Activated T-helper 1 cell treated with anti-CD3 and anti-CD28 coated beads, Interleukin-12 subunit alpha, Interleukin-12 subunit beta, Interleukin-2, Interleukin-4 antibody, amounts not matched to agents 30 ng/mL and 10 ng/mL and 1 ng/mL, durations not matched to agents 14 hours and 24 hours and 36 hours (primary cell): ENCODE measurements at regions of chr3 and their contacts with region 1.

Region 1: DNA sequence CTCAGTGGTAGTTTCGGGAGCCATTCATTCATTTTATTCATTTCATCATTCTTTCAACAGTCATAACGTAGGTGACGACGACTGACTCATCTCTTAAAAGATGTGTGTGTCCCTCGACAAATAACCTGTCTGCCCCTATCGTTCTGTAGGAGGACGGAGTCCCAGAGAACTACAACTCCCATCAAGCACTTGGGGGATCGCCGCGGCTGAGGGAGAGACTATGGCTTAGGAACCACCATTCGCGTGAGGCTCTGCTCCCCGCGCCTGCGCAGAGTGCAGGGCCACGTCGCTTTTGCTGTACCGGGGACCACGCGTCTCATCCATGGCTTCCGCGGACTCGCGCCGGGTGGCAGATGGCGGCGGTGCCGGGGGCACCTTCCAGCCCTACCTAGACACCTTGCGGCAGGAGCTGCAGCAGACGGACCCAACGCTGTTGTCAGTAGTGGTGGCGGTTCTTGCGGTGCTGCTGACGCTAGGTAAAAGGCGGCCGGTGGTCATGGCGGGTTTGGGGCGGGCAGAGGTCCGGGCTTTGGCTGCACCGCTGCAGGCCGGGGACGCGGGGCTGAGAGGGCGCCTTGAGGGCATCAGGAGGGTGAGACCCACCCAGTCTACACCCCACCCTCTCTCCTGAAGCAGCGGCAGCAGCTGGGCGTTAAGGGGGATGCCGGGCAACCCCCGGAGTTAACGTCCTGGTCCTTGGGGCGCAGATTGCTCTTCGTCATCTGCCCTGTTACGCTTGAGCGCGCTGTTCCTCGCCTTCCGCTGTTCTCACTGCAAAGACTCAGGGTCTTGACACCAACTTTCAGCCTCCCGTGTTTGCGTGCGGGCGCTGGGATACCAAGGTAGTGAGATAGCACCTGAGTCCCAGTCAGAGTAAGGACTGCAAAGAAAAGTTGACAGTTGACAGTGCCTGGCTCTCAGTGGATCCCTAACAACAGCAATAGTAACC is at the start of gene SRPRB:
- DNase-seq: peak; percentile 95
- H3K4me3 Mint-ChIP-seq: peak within 1 kb of the TSS; percentile 99
- H3K27ac Mint-ChIP-seq: peak within 1 kb of the TSS; percentile 95
- H3K4me1 Mint-ChIP-seq: peaks cover 28% of the 10 kb centered on the region
- H3K27me3 Mint-ChIP-seq: peaks cover 7% of the 10 kb centered on the region
- total RNA-seq, gene SRPRB: 108 and 115 TPM in 2 replicates

Region 2: DNA sequence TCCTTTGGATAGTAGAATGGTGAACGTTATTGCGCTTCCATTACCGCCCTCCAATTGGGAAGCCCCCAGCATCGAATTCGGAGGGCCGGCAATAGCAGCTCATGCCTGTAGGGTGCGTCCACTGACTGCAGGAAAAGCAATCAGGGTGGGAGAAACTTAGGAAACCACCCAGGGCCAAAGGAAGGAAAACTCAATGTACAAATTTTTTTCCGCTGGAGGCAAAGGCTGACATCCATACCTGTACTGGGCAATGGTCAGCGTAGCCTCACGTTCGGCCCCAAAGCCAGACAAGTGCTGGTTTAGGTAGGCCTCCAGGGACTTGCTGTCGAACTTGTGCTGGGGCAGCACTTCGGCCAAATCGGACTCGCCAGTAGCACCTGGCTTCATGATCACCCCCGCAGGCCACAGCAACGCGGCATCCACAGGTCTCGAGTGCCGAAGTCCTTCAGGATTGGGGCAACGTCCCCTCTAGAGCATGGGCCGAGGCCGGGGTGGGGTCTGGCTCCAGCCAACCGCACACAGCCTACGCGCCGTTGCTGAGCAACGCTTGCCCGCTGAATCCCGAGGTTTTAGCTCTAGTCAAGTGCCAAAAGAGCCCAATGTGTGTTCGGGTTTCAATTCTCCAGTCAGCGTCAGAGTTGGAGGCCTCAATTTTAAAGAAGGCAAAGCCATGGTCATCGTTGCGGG is 1146.3 kb before region 1 on chr3 and contains the start of gene ACAD11:
- intact Hi-C with region 1: loop called (anchors 1 kb)
- DNase-seq: peak; percentile 24
- H3K4me3 Mint-ChIP-seq: peak within 1 kb of the TSS; percentile 97
- H3K27ac Mint-ChIP-seq: peak within 1 kb of the TSS; percentile 98
- H3K4me1 Mint-ChIP-seq: peaks cover 44% of the 10 kb centered on the region
- H3K27me3 Mint-ChIP-seq: no peaks in the 10 kb centered on the region
- total RNA-seq, gene ACAD11: 14.1 and 14.3 TPM in 2 replicates

Region 3: GRCh38 chr3:133448478-133449122 is 357.2 kb before region 1 on chr3:
- intact Hi-C with region 1: loop called (anchors 5 kb)
- DNase-seq: peak; percentile 22
- H3K4me3 Mint-ChIP-seq: peak overlapping the region; percentile 34
- H3K27ac Mint-ChIP-seq: peak overlapping the region; percentile 80
- H3K4me1 Mint-ChIP-seq: peaks cover 34% of the 10 kb centered on the region
- H3K27me3 Mint-ChIP-seq: peaks cover 2% of the 10 kb centered on the region

Region 4: DNA sequence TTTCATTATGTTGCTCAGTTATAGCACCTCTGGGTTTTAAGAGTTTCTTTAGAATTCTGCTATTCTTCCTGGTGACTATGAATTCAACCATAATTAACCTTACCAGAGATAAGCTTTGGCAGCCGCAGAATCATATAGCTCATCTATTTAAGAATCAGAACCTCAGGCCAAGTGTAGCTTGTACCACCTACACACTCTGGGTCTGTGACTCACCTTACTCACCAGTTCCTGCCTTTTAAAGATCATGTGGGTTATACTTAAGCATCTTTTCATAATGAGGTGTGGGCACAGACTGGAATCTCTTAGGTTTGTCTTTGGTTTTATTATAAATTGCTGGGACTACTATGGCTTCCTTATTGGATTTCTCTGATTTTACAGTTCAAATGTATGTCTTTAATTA is 210.5 kb before region 1 on chr3:
- intact Hi-C with region 1: loop called (anchors 5 kb)
- DNase-seq: no peak
- H3K4me3 Mint-ChIP-seq: peak overlapping the region; percentile 1
- H3K27ac Mint-ChIP-seq: peak overlapping the region; percentile 20
- H3K4me1 Mint-ChIP-seq: peaks cover 25% of the 10 kb centered on the region
- H3K27me3 Mint-ChIP-seq: no peaks in the 10 kb centered on the region

Region 5: GRCh38 chr3:133821767-133822638 is 16.2 kb after region 1 on chr3:
- intact Hi-C with region 1: loop called (anchors 1 kb)
- DNase-seq: no peak
- H3K4me3 Mint-ChIP-seq: no peak overlapping the region
- H3K27ac Mint-ChIP-seq: no peak overlapping the region
- H3K4me1 Mint-ChIP-seq: no peaks in the 10 kb centered on the region
- H3K27me3 Mint-ChIP-seq: no peaks in the 10 kb centered on the region

Region 6: DNA sequence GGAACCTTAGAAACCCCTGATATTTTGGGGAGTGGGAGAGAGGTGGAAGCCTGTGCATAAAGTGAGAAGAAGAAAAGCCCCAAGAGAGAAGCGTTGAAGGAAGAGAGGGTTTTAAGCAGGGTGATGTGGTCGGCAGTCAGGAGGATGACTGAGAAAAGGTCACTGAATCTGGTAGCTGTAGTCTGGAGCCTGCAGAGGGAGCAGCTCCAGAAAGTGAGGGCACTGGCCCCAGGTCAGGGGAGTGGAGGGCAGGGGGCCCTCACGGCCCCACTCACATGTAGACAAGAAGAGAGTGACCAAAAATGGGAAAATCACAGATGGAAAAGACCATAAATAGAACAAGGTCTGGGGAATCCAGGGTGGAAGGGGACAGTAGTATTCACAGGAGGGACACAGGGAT is 339.4 kb after region 1 on chr3:
- intact Hi-C with region 1: no loop called
- DNase-seq: no peak
- H3K4me3 Mint-ChIP-seq: no peak overlapping the region
- H3K27ac Mint-ChIP-seq: no peak overlapping the region
- H3K4me1 Mint-ChIP-seq: no peaks in the 10 kb centered on the region
- H3K27me3 Mint-ChIP-seq: no peaks in the 10 kb centered on the region